Common myeloid progenitor, CD34-positive (primary cell): ENCODE measurements at regions of chr15 and their contacts with region 1.

Region 1: DNA sequence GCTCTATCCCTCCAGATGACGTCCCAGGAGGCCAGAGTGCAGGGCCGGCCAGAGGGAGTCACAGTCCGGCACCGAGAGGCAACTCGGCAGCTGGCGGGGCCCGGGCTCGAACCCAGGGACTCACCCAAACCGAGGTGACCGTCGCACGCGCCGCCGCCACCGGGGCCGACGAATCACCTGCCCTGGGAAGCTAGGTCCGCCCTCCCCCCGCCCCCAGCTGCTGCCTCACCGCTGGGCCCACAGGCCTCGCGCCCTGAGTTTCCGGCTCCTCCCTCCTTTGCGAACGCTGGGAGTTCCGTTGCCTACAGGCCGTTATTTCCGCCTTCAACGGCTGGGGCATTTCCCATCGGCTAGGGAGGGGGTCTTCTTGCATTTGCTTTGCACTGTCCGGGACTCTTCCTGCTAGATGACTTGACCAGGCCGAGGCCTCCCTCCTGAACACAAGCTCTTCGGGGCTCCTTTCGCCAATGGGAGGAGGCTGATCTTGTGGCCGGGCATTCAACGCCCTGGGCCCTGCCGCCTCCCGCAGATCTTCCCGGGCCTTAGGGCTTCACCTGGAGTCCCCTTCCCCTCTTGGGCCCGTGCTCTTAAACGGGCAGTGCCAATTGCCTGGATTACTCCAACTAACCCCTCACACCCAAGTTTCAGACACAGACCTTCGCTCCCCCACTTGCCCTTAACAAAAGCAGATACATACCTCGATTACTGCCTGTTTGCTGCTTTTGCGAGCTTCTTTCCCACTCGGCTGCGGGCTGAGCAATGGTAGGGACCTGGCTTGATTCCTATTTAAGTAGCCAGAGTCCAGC is at the start of gene SNUPN:
- DNase-seq: peak; percentile 94 to 99 (median 97)
- H3K4me3 ChIP-seq: peak within 1 kb of the TSS; percentile 63 to 98 (median 93)
- H3K27ac ChIP-seq: peak within 1 kb of the TSS; percentile 92 to 96
- H3K4me1 ChIP-seq: peaks cover 7 to 37% (median 20%) of the 10 kb centered on the region in 4 experiments
- H3K27me3 ChIP-seq: no peaks in the 10 kb centered on the region

Region 2: GRCh38 chr15:75554717-75555116 is 71.0 kb before region 1 on chr15:
- CTCF ChIA-PET with region 1: no interaction called
- POLR2A ChIA-PET with region 1: no interaction called
- DNase-seq: no peak
- H3K4me3 ChIP-seq: no peak overlapping the region
- H3K27ac ChIP-seq: no peak overlapping the region
- H3K4me1 ChIP-seq: peaks cover 0 to 7% (median 0%) of the 10 kb centered on the region in 4 experiments
- H3K27me3 ChIP-seq: no peaks in the 10 kb centered on the region

Region 3: DNA sequence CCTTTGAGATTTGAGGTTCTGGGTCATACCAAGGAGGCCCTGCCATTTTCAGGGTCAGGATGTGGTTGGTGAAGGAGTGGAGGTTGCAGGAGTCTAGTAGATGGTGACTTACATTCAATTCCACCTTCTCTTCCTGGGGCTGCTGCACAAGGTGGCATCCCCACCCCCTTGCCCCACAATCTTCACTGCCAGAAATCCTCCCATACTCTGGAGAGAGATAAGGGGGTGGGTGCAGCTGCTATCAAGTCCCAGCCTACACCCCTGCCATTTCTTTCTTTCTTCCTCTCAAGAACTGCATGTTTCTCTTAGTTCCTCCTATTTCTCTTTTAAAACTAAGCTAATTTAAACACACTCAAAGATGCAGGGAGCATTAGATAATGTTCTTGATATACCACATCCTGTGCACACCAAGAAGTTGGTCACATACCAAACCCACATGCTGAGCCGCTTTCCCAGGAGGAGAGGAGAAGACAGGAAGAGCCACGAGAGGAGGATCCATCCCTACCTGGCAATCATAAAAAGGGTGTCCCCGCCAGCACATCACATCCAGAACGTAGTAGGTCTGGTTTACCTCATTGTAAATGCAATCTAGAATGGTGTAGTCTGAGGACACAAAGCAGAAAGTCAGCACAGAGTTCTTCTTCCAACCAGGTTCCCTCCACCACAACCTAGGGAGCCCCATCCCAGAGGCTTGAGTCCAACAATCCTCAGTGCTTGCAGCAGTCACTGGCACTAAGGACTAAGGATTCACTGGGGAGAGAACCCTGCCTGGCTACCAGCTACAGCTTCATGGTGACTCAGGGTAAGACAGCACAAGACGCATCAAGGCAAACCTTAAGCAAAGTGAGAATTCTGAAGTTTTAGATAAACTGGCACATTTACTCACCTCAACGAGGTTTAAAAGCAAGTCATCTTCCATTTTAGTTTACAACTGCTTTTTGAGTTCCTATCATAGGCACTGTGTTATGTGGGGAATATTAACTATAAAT is 18.7 kb before region 1 on chr15:
- CTCF ChIA-PET with region 1: interaction called, 28 read pairs
- POLR2A ChIA-PET with region 1: no interaction called
- DNase-seq: peak; percentile 52 to 87 (median 78)
- H3K4me3 ChIP-seq: peak overlapping the region in 3 of 7 experiments; percentile 6 to 42 (median 35)
- H3K27ac ChIP-seq: peak overlapping the region in 1 of 2 experiments; percentile 43
- H3K4me1 ChIP-seq: peaks cover 15 to 33% (median 28%) of the 10 kb centered on the region in 4 experiments
- H3K27me3 ChIP-seq: no peaks in the 10 kb centered on the region

Region 4: DNA sequence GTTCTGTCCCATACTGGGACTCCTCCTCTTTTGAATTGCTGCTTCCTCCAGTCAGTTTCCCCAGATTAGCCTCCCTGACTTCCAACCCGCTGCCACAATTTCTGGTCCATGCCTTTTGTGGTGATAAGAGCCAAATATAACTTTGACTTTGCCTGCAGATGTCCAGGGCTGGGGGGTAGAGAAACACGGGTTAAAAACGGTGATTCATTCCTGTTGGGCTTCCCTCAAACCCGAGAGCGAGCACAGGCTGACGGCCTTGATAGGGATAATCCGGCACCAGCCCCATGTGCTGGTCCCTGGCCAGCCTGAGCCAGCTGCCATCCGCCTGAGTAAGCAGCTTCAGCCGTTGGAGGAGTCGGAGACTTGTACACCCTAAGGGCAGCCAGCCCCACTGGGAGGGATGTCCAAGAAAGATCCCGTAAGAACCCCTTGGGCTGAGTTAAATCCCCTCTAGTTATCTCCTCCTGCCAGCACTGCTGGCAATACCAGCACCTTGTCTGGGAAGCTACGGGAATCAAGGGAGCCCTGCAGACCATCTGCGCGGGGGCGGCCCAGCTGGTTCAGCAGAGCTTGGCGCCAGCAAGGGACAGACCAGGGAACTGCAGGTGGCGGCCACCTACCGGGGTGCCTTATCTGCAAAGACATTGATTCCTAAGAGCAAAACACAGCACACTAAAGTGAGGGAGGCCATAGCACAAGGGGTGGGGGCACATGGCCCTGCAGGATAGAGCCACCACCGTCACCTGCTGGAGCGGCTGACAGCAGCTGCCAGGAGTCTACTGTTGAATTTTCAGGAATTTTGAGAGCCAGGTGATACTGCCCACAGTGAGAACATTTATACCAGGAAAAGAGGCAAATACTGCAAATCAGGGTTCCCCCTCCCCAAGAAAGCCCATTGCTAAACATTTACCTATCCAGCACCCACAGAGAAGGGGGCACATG is 68.8 kb after region 1 on chr15:
- CTCF ChIA-PET with region 1: no interaction called
- POLR2A ChIA-PET with region 1: no interaction called
- DNase-seq: peak; percentile 50 to 89 (median 83)
- H3K4me3 ChIP-seq: peak overlapping the region in 2 of 7 experiments; percentile 4 to 11
- H3K27ac ChIP-seq: no peak overlapping the region
- H3K4me1 ChIP-seq: peaks cover 0 to 35% (median 34%) of the 10 kb centered on the region in 4 experiments
- H3K27me3 ChIP-seq: peaks cover 0 to 70% (median 20%) of the 10 kb centered on the region in 5 experiments